ENCODE measurements at regions of chr19 and their contacts with region 1.

Region 1: GRCh38 chr19:18340190-18340989 is at the start of gene PGPEP1:
- DNase-seq: peak; percentile 61 to 97 (median 78)

Region 2: DNA sequence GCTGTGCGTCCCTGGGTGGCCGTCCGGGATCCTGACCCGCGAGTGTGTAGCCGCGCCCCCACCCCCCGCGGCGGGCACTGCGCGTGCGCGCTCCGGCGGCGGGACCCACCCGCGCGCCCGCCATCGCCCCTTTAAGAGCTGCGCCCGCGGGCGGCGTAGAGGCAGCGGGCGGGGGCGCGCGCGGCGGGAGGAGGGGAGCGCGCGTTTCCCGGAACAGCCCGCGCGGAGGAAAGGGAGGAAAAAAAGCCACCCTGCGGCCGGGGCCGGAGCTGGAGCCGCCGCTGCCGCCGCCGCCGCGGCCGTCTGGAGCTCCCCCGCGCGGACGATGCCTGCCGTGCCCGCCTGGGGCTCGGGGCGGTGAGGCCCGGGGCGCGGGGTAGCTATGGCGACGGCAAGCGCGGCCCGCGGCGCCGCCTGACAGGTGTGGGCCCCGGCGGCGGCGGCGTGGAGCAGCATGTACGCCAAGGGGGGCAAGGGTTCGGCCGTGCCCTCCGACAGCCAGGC is 78.9 kb after region 1 on chr19 and contains the start of gene SSBP4:
- intact Hi-C with region 1: loop called (anchors 5 kb)
- DNase-seq: peak in 9 of 10 donors; percentile 31 to 95 (median 66)

Region 3: DNA sequence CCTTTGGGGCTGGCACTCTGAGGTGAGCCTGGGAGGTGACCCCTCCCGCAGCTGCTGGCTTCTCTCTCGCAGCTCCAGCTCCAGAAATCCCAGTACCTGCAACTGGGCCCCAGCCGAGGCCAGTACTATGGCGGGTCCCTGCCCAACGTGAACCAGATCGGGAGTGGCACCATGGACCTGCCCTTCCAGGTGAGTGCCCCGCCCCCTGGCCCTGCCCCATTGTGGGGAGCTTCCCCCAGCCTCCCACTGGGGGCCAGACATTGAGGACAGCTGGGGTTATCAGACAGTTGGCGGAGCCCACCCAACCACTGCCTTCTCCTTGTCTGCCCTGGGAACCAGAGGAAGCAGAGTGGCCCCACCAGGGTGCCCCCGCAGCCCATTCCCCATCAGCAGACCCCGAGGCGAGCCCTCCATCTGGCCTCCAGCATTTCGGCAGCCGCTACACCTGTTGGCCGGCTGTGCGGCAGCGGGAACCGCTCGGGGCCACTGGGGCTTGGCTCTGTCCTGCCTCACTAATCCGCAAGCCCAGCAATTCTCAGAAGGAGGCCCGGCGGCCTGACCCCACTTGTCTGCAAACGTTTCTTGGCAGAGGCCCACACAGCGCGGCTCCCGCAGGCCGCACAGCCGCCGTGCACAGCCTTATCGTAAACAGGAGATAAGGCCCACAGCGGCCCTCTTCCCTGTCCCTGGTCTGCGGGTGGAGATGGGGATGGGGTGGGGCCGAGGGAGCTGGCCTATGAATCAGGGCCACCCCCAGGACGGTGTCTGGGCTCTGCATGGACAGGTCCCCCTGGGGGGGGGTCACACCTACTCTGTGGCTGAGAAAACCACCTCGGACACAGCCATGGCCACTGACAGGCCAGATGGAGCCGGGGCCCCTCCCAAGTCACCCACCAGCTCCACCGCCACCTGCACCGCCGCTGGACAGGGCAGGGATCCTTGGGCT is 402.7 kb after region 1 on chr19:
- intact Hi-C with region 1: no loop called
- DNase-seq: peak in 1 of 10 donors; percentile 87

Measured in posterior cingulate gyrus (tissue), 11 donors.